ENCODE measurements at regions of chr9 and their contacts with region 1.

Region 1: DNA sequence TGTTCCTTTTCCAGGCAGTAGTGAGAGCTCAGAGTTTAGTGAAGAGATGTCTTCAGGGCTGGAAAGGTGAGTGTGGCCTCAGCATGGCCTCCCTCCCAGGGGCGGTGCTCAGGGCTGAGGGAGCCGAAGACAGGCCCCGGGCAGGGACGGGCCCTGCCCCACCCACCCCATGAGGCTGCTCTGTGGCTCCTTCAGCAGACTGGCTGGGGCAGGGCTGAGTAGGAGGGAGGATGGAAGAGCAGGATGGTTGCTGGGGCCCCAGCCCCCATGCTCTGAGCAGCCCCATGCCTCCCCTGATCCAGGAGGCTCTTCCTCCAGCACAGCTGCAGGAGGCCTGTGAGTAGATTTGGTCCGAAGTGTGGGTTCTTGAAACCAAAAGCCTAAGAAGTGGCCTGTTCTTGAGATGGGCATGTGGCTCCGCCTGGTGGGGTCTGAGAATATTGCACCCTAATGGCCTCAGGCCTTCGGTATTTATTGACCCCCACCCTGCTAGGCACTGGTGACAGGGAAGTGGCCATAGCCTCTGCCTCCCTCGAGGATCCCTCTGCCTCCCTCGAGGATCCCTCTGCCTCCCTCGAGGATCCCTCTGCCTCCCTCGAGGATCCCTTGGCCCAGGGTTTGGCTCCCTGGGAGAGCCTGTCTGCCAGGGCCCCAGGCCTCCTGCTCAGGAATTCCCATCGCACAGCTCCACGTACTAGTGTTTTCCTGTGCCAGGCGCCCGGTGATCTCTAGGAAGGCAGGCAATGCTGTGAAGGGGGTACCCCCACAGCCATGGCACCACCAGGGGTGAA is 65.4 kb upstream of the GARNL3 start:
- DNase-seq: peak; percentile 85
- H3K27ac ChIP-seq: peak overlapping the region; percentile 14; the same call in 1 of the 2 replicates
- CTCF ChIP-seq: peak; percentile 99

Region 2: DNA sequence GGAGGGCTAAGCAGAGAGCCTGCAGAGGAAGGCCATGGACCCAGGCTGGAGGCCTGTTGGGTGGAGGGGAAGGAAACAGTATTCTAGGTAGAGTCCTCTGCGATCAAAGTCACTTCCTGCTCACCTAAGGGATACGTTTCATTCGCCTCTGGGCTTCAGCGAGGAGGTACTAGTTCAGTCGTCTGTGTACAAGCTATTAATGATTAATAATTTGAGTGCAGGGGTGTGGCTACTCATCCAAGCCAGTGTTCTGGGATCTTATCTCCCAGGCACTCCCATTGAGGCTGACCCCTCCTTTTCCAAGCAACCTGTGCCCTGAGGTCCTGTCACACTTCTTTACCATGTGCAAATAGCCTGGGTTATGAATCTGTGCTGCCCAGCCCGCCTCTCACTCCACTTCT is 259.4 kb before region 1 on chr9:
- CTCF ChIA-PET with region 1: interaction called, 104 read pairs
- POLR2A ChIA-PET with region 1: no interaction called
- DNase-seq: no peak
- H3K27ac ChIP-seq: no peak overlapping the region
- CTCF ChIP-seq: no peak

Region 3: GRCh38 chr9:126947529-126947928 is 251.7 kb before region 1 on chr9:
- CTCF ChIA-PET with region 1: interaction called, 104 read pairs
- POLR2A ChIA-PET with region 1: no interaction called
- DNase-seq: peak; percentile 33
- H3K27ac ChIP-seq: no peak overlapping the region
- CTCF ChIP-seq: no peak

Region 4: GRCh38 chr9:126965541-126966428 is 233.4 kb before region 1 on chr9:
- CTCF ChIA-PET with region 1: interaction called, 19 read pairs
- POLR2A ChIA-PET with region 1: no interaction called
- DNase-seq: peak; percentile 87
- H3K27ac ChIP-seq: no peak overlapping the region
- CTCF ChIP-seq: peak; percentile 96

Measured in RWPE1 (cell line).